Activated naive CD4-positive, alpha-beta T cell treated with anti-CD3 and anti-CD28 coated beads for 36 hours (primary cell): ENCODE measurements at regions of chr9 and their contacts with region 1.

Region 1: DNA sequence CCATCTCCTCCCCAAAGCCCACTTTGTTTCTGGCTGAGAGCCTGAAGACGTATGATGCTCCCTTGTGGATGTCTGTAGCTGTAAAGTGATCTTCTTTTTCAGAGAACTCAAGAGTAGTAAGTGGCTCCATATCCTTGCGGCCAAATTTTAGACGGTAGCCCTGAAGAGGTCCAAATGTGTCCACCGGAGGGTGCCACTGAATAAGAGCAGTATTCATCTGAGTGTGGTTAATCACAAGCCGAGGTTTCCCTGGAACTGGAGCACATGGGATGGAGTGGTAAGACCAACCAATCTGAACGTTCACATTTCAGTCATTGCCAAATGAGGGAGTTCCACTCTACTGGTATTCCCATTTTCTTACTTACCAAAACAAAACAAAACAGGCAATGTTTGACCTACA is 686.5 kb upstream of the DMAC1 start:
- DNase-seq: peak; percentile 23
- H3K4me3 Mint-ChIP-seq: no peak overlapping the region
- H3K27ac Mint-ChIP-seq: no peak overlapping the region
- H3K4me1 Mint-ChIP-seq: no peaks in the 10 kb centered on the region
- H3K27me3 Mint-ChIP-seq: peaks cover 2% of the 10 kb centered on the region

Region 2: GRCh38 chr9:8136477-8136876 is 349.6 kb before region 1 on chr9:
- CTCF ChIA-PET with region 1: no interaction called
- intact Hi-C with region 1: no loop called
- DNase-seq: no peak
- H3K4me3 Mint-ChIP-seq: no peak overlapping the region
- H3K27ac Mint-ChIP-seq: no peak overlapping the region
- H3K4me1 Mint-ChIP-seq: peaks cover 8% of the 10 kb centered on the region
- H3K27me3 Mint-ChIP-seq: no peaks in the 10 kb centered on the region

Region 3: GRCh38 chr9:8533681-8534080 is 47.6 kb after region 1 on chr9:
- CTCF ChIA-PET with region 1: no interaction called
- intact Hi-C with region 1: no loop called
- DNase-seq: no peak
- H3K4me3 Mint-ChIP-seq: no peak overlapping the region
- H3K27ac Mint-ChIP-seq: no peak overlapping the region
- H3K4me1 Mint-ChIP-seq: no peaks in the 10 kb centered on the region
- H3K27me3 Mint-ChIP-seq: no peaks in the 10 kb centered on the region

Region 4: DNA sequence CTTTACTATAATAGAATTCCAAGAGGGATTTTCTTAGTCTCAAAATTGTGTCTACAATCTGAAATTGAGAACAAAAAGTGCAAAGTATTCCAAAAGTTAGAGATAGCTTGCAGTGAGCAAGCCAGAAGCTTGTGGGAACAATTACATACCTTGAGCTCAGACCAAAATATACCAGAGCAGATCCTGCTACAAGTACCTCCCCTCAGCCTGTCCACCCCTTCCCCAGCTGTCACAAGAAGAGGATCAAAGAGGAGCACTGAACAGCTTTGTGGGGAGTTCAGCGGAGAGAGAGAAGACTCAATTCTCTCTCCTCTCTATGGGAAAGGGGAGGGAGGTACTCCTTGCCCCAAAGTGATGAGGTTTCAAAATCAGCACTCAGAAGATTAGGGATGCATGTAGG is 182.7 kb after region 1 on chr9:
- CTCF ChIA-PET with region 1: no interaction called
- intact Hi-C with region 1: no loop called
- DNase-seq: no peak
- H3K4me3 Mint-ChIP-seq: no peak overlapping the region
- H3K27ac Mint-ChIP-seq: no peak overlapping the region
- H3K4me1 Mint-ChIP-seq: no peaks in the 10 kb centered on the region
- H3K27me3 Mint-ChIP-seq: no peaks in the 10 kb centered on the region

Region 5: GRCh38 chr9:8895861-8896224 is 409.7 kb after region 1 on chr9:
- CTCF ChIA-PET with region 1: no interaction called
- intact Hi-C with region 1: loop called (anchors 1 kb)
- DNase-seq: no peak
- H3K4me3 Mint-ChIP-seq: no peak overlapping the region
- H3K27ac Mint-ChIP-seq: no peak overlapping the region
- H3K4me1 Mint-ChIP-seq: no peaks in the 10 kb centered on the region
- H3K27me3 Mint-ChIP-seq: peaks cover 6% of the 10 kb centered on the region